AG04450 (cell line): ENCODE measurements at regions of chrX and their contacts with region 1.

Region 1: DNA sequence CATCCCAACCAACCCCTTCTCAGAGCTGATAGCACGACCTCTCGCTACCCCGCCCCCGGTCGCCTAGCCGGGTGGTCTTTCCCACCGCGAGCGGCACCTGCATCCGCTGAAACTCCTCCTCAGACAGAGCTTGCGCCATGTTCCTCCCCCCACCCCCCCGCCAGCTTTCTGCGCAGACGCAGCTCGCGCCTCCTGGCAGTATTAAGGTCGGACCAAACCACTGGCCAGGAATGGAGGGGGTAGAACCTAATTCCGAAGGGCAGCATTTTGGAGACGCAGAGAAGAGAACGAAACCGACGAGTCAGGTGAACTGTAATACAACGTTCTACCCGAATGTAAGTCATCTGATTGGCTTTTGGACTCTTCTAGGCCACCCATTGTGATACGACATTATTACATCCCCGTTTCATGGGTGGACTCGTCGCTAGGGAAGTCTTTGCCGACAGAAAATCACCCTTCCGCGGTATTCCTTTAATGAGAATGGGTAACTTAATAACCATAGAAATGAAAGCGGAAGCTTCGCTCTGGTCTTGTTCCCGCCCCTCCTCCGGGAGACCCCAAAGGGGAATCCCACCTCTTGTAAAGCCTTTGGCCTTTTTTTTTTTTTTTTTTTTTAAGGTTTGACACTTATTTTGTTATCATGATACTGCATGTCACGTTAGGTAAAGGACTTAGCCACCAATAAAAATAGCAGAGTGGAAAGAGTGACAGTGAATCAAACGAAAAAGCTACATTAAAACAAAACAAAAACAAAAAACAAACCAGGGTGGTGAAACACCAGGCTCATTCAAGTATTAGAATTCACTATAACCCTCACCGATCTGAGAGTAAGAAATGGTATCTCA is at the start of gene GRIPAP1:
- DNase-seq: peak; percentile 89
- H3K4me3 ChIP-seq: peak within 1 kb of the TSS; percentile 80
- H3K27ac ChIP-seq: peak within 1 kb of the TSS; percentile 88
- H3K27me3 ChIP-seq: no peaks in the 10 kb centered on the region
- CTCF ChIP-seq: no peak
- polyA plus RNA-seq, gene GRIPAP1: 24.3 and 25.0 TPM in 2 replicates

Region 2: GRCh38 chrX:49043220-49043986 is 41.1 kb after region 1 on chrX and contains the start of gene TFE3:
- CTCF ChIA-PET with region 1: no interaction called
- POLR2A ChIA-PET with region 1: interaction called, 12 read pairs
- DNase-seq: peak; percentile 97
- H3K4me3 ChIP-seq: peak within 1 kb of the TSS; percentile 79
- H3K27ac ChIP-seq: peak within 1 kb of the TSS; percentile 89
- H3K27me3 ChIP-seq: no peaks in the 10 kb centered on the region
- CTCF ChIP-seq: peak; percentile 56
- polyA plus RNA-seq, gene TFE3: 28.4 and 42.0 TPM in 2 replicates

Region 3: GRCh38 chrX:49230469-49231232 is 228.3 kb after region 1 on chrX:
- CTCF ChIA-PET with region 1: no interaction called
- POLR2A ChIA-PET with region 1: no interaction called
- DNase-seq: no peak
- H3K4me3 ChIP-seq: no peak overlapping the region
- H3K27ac ChIP-seq: no peak overlapping the region
- H3K27me3 ChIP-seq: no peaks in the 10 kb centered on the region
- CTCF ChIP-seq: no peak